ENCODE measurements at regions of chr14 and their contacts with region 1.

Region 1: DNA sequence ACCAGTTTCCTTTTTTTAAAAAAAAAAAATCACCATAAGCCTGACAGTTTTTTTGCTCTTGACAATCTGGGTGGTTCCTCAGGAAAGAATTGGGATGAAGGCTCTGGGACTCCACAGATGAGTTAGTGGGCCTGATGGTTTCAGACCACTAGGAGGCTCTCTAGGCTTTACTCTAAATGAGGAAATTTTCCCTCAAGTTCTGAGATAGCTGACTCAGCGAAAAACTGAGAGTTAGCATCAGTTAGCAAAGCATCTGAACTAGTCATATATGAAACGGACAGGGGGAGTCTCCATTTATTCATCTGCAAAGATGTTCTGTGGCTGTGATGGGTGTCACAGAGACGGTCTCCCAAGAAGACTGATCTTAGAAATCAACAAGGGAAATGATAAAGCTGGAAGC is 314.3 kb upstream of the OR4E1 start:
- DNase-seq: peak; percentile 53

Region 2: GRCh38 chr14:21852061-21852664 is 135.8 kb before region 1 on chr14:
- CTCF ChIA-PET with region 1: interaction called, 10 read pairs
- POLR2A ChIA-PET with region 1: no interaction called
- DNase-seq: peak; percentile 27

Region 3: DNA sequence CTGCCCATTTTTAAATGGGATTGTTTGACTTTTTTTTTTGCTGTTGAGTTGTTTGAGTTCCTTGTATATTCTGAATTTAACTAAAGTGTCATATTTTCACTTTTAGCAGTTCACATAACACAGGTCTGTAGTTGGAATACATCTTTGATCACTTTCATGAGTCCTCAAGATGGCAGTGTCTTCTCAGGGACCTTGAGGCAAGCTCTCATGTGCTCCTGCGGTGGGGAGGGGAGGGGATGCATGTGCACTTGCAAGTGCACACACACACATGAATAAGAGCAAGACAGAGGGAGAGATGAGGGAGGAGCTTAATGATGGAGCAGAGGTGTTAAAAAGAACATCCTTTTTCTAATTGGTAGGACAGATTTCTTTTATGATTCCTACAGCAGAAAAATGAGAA is 22.9 kb before region 1 on chr14:
- CTCF ChIA-PET with region 1: no interaction called
- POLR2A ChIA-PET with region 1: no interaction called
- DNase-seq: no peak

Measured in HEK293T (cell line).